WTC11 (cell line): ENCODE measurements at regions of chr10 and their contacts with region 1.

Region 1: DNA sequence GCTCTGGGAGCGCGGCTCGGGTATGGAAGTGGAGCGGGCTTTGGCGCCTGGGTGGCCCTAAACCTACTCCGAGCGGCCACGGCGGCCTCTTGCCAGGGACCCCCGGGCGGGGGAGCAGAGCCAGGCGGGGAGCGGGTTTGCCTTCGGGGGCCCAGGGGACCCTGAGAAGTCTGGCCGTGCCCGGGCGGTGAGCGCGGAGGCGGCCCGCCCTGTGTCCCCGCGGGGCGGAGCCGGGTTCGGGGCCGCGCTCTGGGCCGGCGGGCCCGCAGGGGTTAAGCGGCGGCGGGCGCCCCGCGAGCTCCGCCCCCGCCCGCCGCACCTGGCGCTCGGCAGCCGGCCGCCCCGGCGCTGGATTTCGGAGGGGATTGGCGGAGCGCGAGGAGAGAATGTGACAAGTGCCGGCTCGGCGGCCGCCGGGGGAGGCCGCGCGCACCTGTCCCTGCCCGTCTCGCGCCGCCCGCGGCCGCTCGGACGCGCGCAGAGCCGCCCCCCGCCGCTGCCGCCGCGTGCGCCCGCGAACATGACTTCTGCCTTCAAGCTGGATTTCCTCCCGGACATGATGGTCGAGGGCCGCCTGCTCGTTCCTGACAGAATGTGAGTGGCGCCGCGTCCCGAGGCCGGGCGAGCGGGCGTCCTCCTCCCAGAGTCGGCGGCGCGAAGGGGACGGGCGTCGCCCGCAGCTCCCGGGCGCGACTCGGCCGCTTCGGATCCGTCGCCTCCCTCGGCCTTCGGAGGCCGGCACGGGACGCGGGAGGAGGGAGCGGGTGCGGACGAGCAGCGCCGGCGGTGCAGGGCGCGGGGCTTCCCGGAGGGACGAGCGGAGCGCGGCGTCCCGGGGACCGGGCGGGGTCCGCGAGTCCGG is at the start of gene CELF2:
- DNase-seq: peak; percentile 84
- ATAC-seq: peak; percentile 85
- H3K4me3 Mint-ChIP-seq: peak within 1 kb of the TSS; percentile 82
- H3K27ac Mint-ChIP-seq: peak within 1 kb of the TSS; percentile 90
- H3K4me1 Mint-ChIP-seq: peaks cover 72% of the 10 kb centered on the region
- H3K27me3 Mint-ChIP-seq: peaks cover 29% of the 10 kb centered on the region
- CTCF ChIP-seq: no peak
- total RNA-seq, gene CELF2: 16.8 to 24.6 TPM (median 17.8 TPM) in 3 replicates

Region 2: DNA sequence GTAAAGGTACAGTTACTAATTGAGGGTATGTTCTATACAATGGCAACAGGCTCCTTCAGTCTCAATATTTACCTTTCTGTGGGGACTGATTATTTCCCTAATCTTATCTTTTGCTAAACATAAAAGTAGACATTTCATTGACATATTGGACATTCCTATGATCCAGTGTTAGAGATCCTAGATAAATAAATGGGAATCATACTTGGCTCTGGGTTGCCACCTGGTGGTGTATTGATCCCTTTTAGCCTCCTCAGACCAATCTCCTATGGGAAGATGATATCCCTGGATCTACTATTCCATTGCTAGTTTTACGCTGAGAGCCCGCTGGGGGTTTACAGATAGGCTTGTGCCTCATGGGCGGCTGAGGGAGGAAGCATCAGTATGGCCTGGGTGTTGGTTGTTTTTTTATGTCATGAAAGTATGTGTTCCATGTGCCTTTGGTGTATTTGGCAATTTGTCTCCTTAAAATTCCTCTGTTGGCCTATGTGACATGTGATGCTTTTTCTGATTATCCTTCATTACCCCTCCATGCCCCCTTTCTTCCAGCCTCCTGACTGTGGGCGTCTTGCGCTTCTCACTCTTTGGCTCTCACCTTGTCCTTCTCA is 18.7 kb after region 1 on chr10:
- CTCF ChIA-PET with region 1: interaction called, 13 read pairs
- POLR2A ChIA-PET with region 1: interaction called, 4 read pairs
- DNase-seq: peak; percentile 42
- ATAC-seq: peak; percentile 82
- H3K4me3 Mint-ChIP-seq: no peak overlapping the region
- H3K27ac Mint-ChIP-seq: peak overlapping the region; percentile 5; the same call in 1 of the 2 replicates
- H3K4me1 Mint-ChIP-seq: peaks cover 50% of the 10 kb centered on the region
- H3K27me3 Mint-ChIP-seq: no peaks in the 10 kb centered on the region
- CTCF ChIP-seq: peak; percentile 45

Region 3: DNA sequence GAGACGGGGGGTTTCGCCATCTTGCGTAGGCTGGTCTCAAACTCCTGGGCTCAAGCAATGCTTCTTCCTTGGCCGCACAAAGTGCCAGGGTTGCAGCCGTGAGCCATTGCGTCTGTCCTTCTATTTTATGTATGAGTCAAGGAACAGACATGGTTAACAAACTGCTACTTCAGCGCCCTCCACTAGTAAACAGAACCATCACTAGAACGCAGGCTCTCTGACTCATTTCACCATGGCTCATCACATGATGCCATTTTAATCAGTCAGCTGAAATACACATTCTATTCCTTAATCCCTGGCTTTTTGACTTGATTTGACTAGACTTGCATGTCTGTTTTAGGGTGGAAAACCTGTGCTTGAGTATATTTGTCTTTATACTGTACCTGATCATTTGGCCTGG is 41.2 kb after region 1 on chr10:
- CTCF ChIA-PET with region 1: no interaction called
- POLR2A ChIA-PET with region 1: no interaction called
- DNase-seq: no peak
- ATAC-seq: no peak
- H3K4me3 Mint-ChIP-seq: no peak overlapping the region
- H3K27ac Mint-ChIP-seq: no peak overlapping the region
- H3K4me1 Mint-ChIP-seq: peaks cover 31% of the 10 kb centered on the region
- H3K27me3 Mint-ChIP-seq: no peaks in the 10 kb centered on the region
- CTCF ChIP-seq: no peak